AG04450 (cell line): ENCODE measurements at regions of chr14 and their contacts with region 1.

Region 1: DNA sequence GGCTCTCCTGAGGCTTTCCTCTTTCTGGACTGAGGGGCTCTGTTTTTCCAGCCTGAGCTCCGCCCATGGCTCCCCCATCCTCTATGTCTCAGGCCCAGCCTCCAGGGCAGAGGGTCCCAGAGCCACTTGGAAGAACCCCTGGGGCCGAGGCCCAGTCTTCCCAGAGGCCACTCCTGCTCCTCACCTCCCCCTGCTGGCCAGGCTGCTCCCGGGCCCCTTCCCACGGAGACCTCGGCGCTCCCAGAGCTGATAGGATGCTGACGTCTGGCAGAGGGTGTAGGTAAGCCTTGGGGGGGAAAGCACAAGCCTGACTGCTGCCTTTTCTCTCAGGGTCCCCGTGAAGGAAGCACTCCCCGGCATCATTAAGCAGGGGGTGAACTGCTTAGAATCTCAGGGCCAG is 51.4 kb downstream of the ERH start:
- DNase-seq: no peak
- H3K4me3 ChIP-seq: no peak overlapping the region
- H3K27ac ChIP-seq: no peak overlapping the region
- H3K27me3 ChIP-seq: peaks cover 48% of the 10 kb centered on the region
- CTCF ChIP-seq: peak; percentile 75

Region 2: GRCh38 chr14:69214393-69214792 is 132.3 kb before region 1 on chr14:
- CTCF ChIA-PET with region 1: interaction called, 17 read pairs
- POLR2A ChIA-PET with region 1: no interaction called
- DNase-seq: no peak
- H3K4me3 ChIP-seq: no peak overlapping the region
- H3K27ac ChIP-seq: no peak overlapping the region
- H3K27me3 ChIP-seq: no peaks in the 10 kb centered on the region
- CTCF ChIP-seq: no peak

Region 3: DNA sequence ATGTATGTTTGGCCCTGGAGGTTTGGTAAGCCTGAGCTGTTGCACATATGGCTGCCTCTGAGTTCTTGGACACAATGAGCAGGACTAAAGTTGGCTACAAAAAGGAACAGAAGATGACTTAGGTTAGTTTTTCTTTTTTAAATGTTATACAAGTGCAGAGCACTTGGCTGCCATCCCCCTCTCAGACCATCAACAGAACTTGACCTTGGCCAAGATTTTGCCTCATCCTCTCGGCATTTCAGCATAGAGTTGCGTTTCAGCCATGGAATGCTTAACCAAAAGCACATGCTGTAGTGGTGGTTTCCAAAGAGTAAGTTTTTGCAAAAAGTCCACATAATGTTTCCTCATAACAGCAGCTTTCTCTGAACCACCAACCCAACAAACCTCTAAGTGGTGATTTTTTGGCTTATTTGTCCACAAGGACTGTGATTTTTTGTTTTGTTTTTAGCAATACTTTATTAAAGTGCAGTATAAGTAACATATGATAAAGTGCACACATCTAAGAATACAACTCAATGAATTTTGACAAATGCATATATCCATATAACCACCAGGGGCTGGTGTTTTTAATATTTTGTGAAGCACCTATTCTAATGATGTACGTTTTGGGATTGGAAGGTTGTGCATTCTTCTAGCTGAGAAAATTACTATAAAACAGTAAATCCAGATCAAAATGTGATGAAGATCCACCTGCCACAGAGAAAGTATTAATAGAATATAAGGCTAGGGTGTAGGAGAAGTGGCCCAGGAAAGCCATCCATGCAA is 98.9 kb before region 1 on chr14:
- CTCF ChIA-PET with region 1: interaction called, 76 read pairs
- POLR2A ChIA-PET with region 1: no interaction called
- DNase-seq: peak; percentile 86
- H3K4me3 ChIP-seq: no peak overlapping the region
- H3K27ac ChIP-seq: peak overlapping the region; percentile 80
- H3K27me3 ChIP-seq: peaks cover 11% of the 10 kb centered on the region
- CTCF ChIP-seq: peak; percentile 60

Region 4: GRCh38 chr14:69288011-69288771 is 58.5 kb before region 1 on chr14:
- CTCF ChIA-PET with region 1: interaction called, 10 read pairs
- POLR2A ChIA-PET with region 1: no interaction called
- DNase-seq: peak; percentile 15
- H3K4me3 ChIP-seq: no peak overlapping the region
- H3K27ac ChIP-seq: no peak overlapping the region
- H3K27me3 ChIP-seq: peaks cover 12% of the 10 kb centered on the region
- CTCF ChIP-seq: peak; percentile 61

Region 5: GRCh38 chr14:69501423-69501838 is 154.7 kb after region 1 on chr14:
- CTCF ChIA-PET with region 1: no interaction called
- POLR2A ChIA-PET with region 1: no interaction called
- DNase-seq: no peak
- H3K4me3 ChIP-seq: no peak overlapping the region
- H3K27ac ChIP-seq: no peak overlapping the region
- H3K27me3 ChIP-seq: peaks cover 40% of the 10 kb centered on the region
- CTCF ChIP-seq: no peak